ENCODE measurements at regions of chr18 and their contacts with region 1.

Region 1: GRCh38 chr18:63025251-63026090 is 294.1 kb downstream of the BCL2 start:
- DNase-seq: peak in 2 of 5 donors; percentile 35 to 46
- ATAC-seq: peak in 3 of 4 donors; percentile 75 to 87 (median 82)
- H3K4me3 ChIP-seq: no peak overlapping the region
- H3K27ac ChIP-seq: no peak overlapping the region
- H3K4me1 ChIP-seq: no peaks in the 10 kb centered on the region
- H3K27me3 ChIP-seq: no peaks in the 10 kb centered on the region
- CTCF ChIP-seq: peak in 11 of 12 donors; percentile 19 to 55 (median 43)
- POLR2A ChIP-seq: no peak

Region 2: GRCh38 chr18:63119647-63120046 is 94.2 kb after region 1 on chr18:
- intact Hi-C with region 1: loop called in 4 of 10 experiments (anchors 10 kb)
- DNase-seq: peak in 2 of 5 donors; percentile 33 to 37
- ATAC-seq: peak in 3 of 4 donors; percentile 55 to 68 (median 64)
- H3K4me3 ChIP-seq: no peak overlapping the region
- H3K27ac ChIP-seq: no peak overlapping the region
- H3K4me1 ChIP-seq: peaks cover 0 to 14% (median 4%) of the 10 kb centered on the region in 12 donors
- H3K27me3 ChIP-seq: no peaks in the 10 kb centered on the region
- CTCF ChIP-seq: peak; percentile 11 to 67 (median 49)
- POLR2A ChIP-seq: no peak

Region 3: GRCh38 chr18:63155169-63155852 is 129.8 kb after region 1 on chr18:
- intact Hi-C with region 1: loop called in 2 of 10 experiments (anchors 10 kb)
- DNase-seq: peak; percentile 58 to 74 (median 71)
- ATAC-seq: peak; percentile 64 to 91 (median 85)
- H3K4me3 ChIP-seq: peak overlapping the region in 9 of 12 donors; percentile 16 to 47 (median 40)
- H3K27ac ChIP-seq: peak overlapping the region in 2 of 12 donors; percentile 26 to 72
- H3K4me1 ChIP-seq: peaks cover 0 to 49% (median 6%) of the 10 kb centered on the region in 12 donors
- H3K27me3 ChIP-seq: no peaks in the 10 kb centered on the region
- CTCF ChIP-seq: peak; percentile 64 to 86 (median 74)
- POLR2A ChIP-seq: no peak

Region 4: DNA sequence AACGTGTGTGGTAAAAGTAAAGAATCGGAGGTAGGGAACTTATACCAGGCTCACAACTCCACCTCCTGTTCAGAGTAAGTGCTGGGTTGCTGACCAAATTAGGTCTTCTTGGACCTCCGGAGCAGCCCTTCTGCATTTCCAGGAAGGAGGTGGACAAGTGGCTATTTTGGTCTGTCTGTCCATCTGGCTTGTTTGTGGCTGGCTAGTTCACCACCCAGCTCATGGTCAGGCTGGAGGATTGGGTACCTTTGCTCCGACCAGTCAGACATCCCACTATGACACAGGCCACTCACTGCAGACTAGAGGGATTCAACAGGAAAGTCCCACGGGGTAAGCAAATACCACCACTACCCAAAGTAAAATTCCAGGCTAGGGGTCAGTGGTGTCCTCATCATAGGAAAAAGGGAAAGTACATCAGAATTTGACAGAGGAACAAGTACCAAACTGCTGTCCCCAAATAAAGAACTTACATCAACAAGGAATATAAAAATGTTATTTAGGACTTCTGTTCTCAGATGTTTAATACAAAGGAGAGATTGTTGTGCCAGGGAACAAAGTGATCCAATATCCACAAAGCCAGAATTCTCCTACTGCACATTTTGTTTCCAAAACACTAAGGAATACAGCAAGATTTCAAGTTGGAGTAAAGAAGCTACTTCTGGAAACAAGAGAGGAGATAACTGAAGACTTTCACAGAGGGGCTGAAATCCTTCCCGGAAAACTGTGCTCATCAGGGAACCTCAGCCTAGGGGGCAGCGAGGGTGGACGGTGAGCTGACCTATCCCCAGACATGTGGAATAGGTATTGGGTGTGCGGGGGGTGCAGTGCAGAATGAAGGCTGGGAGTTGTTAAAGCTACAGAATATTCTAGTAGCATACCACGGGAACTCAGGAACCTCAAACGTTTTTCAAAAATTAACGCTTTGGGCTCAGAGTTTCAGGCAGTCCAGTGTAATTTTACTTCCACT is 237.2 kb after region 1 on chr18:
- intact Hi-C with region 1: loop called in 1 of 10 experiments (anchors 5 kb)
- DNase-seq: peak in 3 of 5 donors; percentile 25 to 47 (median 33)
- ATAC-seq: peak; percentile 61 to 85 (median 83)
- H3K4me3 ChIP-seq: no peak overlapping the region
- H3K27ac ChIP-seq: peak overlapping the region in 11 of 12 donors; percentile 1 to 74 (median 52)
- H3K4me1 ChIP-seq: peaks cover 0 to 21% (median 10%) of the 10 kb centered on the region in 12 donors
- H3K27me3 ChIP-seq: no peaks in the 10 kb centered on the region
- CTCF ChIP-seq: peak in 6 of 12 donors; percentile 9 to 51 (median 23)
- POLR2A ChIP-seq: no peak

Region 5: DNA sequence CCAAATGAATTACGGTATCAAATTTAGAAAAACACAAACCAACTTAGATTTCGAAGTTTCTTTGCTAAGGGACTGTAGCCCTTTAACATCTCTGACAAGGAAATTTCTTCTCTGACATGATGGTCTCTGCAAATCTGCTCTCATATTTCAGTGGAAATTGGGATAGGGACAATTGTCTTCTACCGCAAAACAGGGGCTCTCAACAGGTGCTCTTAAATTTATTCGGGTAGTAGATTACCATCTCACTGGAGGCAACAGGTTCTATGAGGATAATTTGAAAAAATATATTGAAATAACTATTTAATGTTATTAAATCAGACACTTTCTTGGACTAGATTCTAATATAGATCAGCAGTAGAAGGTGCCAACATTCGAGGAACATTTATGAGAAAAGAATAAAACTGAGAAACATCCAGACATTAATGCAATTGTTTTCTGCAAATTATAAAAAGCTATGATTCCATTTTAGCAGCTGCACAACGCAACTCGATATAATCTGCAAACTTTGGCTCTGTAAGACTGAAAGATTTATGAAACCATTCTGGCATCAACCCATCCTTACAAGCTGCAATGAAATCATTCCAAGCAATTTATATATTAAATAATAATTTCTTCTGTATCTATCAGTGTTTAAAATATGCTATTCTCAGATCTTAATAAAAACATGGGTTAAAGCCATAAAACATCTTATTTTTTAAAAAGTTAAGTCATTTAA is 304.1 kb after region 1 on chr18:
- intact Hi-C with region 1: loop called in 1 of 10 experiments (anchors 5 kb)
- DNase-seq: no peak
- ATAC-seq: no peak
- H3K4me3 ChIP-seq: no peak overlapping the region
- H3K27ac ChIP-seq: no peak overlapping the region
- H3K4me1 ChIP-seq: no peaks in the 10 kb centered on the region
- H3K27me3 ChIP-seq: no peaks in the 10 kb centered on the region
- CTCF ChIP-seq: no peak
- POLR2A ChIP-seq: no peak

Region 6: DNA sequence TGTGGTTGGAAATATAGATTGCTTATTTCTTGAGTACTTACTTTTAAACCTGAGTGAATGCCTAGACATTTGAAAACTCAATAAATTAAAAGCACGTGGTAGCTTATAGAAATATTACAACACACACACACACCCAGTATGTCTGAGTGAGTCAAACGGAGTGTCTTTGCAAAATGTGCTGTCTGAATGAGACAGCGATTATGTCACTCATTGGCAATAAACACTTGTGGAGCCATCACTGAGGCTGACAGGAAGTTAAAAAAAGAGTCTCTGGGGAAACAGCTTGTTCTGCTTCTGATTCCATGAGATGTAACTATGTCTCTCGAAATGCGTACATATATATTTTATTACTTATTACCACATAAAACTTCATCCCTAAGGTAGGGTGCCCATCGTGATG is 419.1 kb after region 1 on chr18:
- intact Hi-C with region 1: loop called in 1 of 10 experiments (anchors 5 kb)
- DNase-seq: no peak
- ATAC-seq: peak; percentile 19 to 88 (median 74)
- H3K4me3 ChIP-seq: no peak overlapping the region
- H3K27ac ChIP-seq: peak overlapping the region in 2 of 12 donors; percentile 63 to 81
- H3K4me1 ChIP-seq: peaks cover 0 to 16% (median 0%) of the 10 kb centered on the region in 12 donors
- H3K27me3 ChIP-seq: no peaks in the 10 kb centered on the region
- CTCF ChIP-seq: no peak
- POLR2A ChIP-seq: no peak

Measured in heart left ventricle (tissue), 16 donors.